ENCODE measurements at regions of chr20 and their contacts with region 1.

Region 1: GRCh38 chr20:22333885-22334545 is 250.4 kb downstream of the FOXA2 start:
- ATAC-seq: peak; percentile 61 to 90 (median 74)
- H3K4me3 ChIP-seq: no peak overlapping the region
- H3K27ac ChIP-seq: no peak overlapping the region
- H3K4me1 ChIP-seq: no peaks in the 10 kb centered on the region

Region 2: DNA sequence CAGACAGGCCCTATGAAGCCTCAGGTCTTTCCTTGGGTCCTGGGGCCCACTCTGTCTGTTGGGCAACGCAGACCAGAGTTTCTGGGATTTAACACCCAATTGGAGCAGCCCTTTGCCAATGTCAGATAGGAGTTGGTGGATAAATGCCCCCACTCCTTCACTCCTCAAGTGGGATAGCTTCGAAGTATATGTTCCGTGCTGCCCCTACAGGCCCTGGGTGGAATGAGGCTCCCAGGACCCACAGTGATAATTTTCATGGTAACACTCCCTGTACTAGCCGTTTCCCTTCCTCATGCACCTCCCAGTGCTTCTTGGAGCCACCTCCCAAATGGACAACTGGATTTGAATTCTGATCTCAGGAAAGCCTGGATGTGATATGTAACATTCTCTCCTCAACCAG is 104.9 kb after region 1 on chr20:
- in situ Hi-C with region 1: loop called in 1 of 9 experiments (anchors 25 kb)
- ATAC-seq: peak in 1 of 8 experiments; percentile 18
- H3K4me3 ChIP-seq: no peak overlapping the region
- H3K27ac ChIP-seq: no peak overlapping the region
- H3K4me1 ChIP-seq: no peaks in the 10 kb centered on the region

Region 3: GRCh38 chr20:22652681-22653588 is 318.9 kb after region 1 on chr20:
- in situ Hi-C with region 1: loop called in 1 of 9 experiments (anchors 25 kb)
- ATAC-seq: peak in 7 of 8 experiments; percentile 10 to 91 (median 45)
- H3K4me3 ChIP-seq: no peak overlapping the region
- H3K27ac ChIP-seq: no peak overlapping the region
- H3K4me1 ChIP-seq: peaks cover 0 to 9% of the 10 kb centered on the region in 2 donors

Region 4: DNA sequence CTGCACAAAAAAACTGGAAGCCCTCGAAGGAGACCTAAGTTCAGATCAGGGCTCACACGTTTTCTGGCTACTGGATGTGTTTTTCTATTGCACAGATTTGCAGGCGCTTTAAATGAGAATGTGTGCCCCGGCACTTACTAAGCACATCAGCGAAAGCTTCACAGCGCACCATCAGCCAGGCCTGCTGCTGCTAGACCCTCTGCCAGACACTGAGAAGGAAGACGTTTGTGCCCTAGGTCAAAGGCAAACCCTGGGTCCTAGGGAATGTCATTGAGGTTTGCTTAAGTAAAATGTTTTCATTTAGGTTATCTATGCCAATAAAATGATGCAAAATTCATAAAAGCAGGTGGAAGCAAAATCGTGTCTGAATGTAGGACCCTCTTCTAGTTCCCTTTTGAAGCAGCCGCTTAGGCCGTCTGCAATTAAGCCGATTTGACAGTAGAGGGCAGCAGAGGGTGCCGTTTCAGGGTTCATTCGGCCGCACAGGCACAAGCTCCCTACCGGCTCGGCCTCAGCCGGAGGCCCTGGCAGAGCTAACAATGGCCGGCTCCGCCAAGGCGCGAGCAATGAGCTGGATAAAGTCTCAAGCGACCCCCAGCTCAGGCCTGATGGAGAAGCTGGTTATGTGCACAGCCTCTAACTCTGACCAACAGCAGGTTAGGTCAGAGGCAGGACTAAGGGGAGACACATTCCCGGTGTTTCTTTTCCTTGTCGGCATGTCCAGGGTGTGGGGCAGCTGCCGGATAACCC is 357.5 kb after region 1 on chr20:
- in situ Hi-C with region 1: loop called in 7 of 9 experiments (anchors 10 to 25 kb)
- ATAC-seq: peak; percentile 56 to 99 (median 96)
- H3K4me3 ChIP-seq: no peak overlapping the region
- H3K27ac ChIP-seq: no peak overlapping the region
- H3K4me1 ChIP-seq: peaks cover 0 to 4% of the 10 kb centered on the region in 2 donors

Region 5: GRCh38 chr20:23349338-23350195 is 1015.6 kb after region 1 on chr20:
- in situ Hi-C with region 1: loop called in 3 of 9 experiments (anchors 25 kb)
- ATAC-seq: peak in 1 of 8 experiments; percentile 57
- H3K4me3 ChIP-seq: peak overlapping the region; percentile 77 to 98 (median 94)
- H3K27ac ChIP-seq: peak overlapping the region; percentile 90 to 95
- H3K4me1 ChIP-seq: peaks cover 12 to 16% of the 10 kb centered on the region in 2 donors